Naive thymus-derived CD4-positive, alpha-beta T cell (primary cell): ENCODE measurements at regions of chr2 and their contacts with region 1.

Region 1: GRCh38 chr2:112606488-112606902 is 22.1 kb downstream of the CHCHD5 start:
- DNase-seq: no peak
- ATAC-seq: no peak
- H3K4me3 ChIP-seq: no peak overlapping the region
- H3K4me3 Mint-ChIP-seq: no peak overlapping the region
- H3K27ac ChIP-seq: no peak overlapping the region
- H3K27ac Mint-ChIP-seq: peak overlapping the region in 1 of 9 donors; percentile 45
- H3K4me1 ChIP-seq: no peaks in the 10 kb centered on the region
- H3K4me1 Mint-ChIP-seq: peaks cover 0 to 3% (median 0%) of the 10 kb centered on the region in 7 donors
- H3K27me3 ChIP-seq: no peaks in the 10 kb centered on the region
- H3K27me3 Mint-ChIP-seq: peaks cover 0 to 21% (median 0%) of the 10 kb centered on the region in 5 donors

Region 2: DNA sequence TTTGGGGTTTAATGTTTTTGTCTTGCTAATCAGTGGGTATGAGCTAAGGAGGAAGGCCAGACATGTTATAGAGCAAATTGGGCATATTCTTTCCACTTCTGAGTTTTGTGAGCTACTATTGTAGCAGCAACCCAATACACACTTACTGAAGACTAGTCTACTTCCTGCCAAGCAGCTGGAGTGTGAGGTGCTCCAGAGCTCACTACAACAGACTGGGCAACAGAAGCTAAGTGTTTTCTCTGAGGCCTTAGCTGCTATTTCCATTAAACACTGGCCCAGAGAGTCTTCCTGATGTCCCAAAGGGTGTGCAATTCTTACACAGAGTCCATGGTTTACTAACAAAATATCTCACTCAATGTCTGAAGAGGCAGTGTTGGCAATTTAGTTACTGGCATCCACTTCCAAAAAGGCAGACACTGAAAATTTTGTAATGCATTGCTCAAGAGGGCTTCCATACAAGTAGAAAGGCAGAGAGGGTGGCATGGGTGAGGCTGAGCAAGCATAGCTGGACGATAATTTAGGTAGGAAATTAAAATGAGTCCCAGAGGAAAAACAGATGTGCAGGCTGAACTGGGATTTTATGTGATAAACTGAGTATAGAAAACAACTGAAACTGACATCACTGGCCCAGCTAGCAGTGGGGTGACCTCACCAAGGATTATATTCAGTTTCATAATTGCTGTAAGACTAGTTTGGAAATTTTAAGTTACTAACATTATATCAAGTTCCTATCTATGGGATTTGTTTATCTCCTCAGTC is 262.5 kb before region 1 on chr2:
- CTCF ChIA-PET with region 1: no interaction called
- POLR2A ChIA-PET with region 1: no interaction called
- intact Hi-C with region 1: no loop called
- DNase-seq: no peak
- ATAC-seq: no peak
- H3K4me3 ChIP-seq: no peak overlapping the region
- H3K4me3 Mint-ChIP-seq: no peak overlapping the region
- H3K27ac ChIP-seq: no peak overlapping the region
- H3K27ac Mint-ChIP-seq: no peak overlapping the region
- H3K4me1 ChIP-seq: no peaks in the 10 kb centered on the region
- H3K4me1 Mint-ChIP-seq: peaks cover 0 to 14% (median 0%) of the 10 kb centered on the region in 7 donors
- H3K27me3 ChIP-seq: no peaks in the 10 kb centered on the region
- H3K27me3 Mint-ChIP-seq: peaks cover 0 to 10% (median 0%) of the 10 kb centered on the region in 5 donors

Region 3: GRCh38 chr2:112636231-112636960 is 29.9 kb after region 1 on chr2:
- CTCF ChIA-PET with region 1: no interaction called
- POLR2A ChIA-PET with region 1: no interaction called
- intact Hi-C with region 1: no loop called
- DNase-seq: no peak
- ATAC-seq: no peak
- H3K4me3 ChIP-seq: no peak overlapping the region
- H3K4me3 Mint-ChIP-seq: peak overlapping the region in 6 of 10 donors; percentile 1 to 73 (median 35)
- H3K27ac ChIP-seq: no peak overlapping the region
- H3K27ac Mint-ChIP-seq: peak overlapping the region in 6 of 9 donors; percentile 16 to 95 (median 82)
- H3K4me1 ChIP-seq: peaks cover 50 to 59% of the 10 kb centered on the region in 2 donors
- H3K4me1 Mint-ChIP-seq: peaks cover 44 to 81% (median 55%) of the 10 kb centered on the region in 7 donors
- H3K27me3 ChIP-seq: no peaks in the 10 kb centered on the region
- H3K27me3 Mint-ChIP-seq: no peaks in the 10 kb centered on the region

Region 4: GRCh38 chr2:112726497-112727190 is 120.1 kb after region 1 on chr2:
- CTCF ChIA-PET with region 1: interaction called, 57 read pairs
- POLR2A ChIA-PET with region 1: no interaction called
- intact Hi-C with region 1: no loop called
- DNase-seq: peak; percentile 68 to 89 (median 83)
- ATAC-seq: peak; percentile 96
- H3K4me3 ChIP-seq: no peak overlapping the region
- H3K4me3 Mint-ChIP-seq: no peak overlapping the region
- H3K27ac ChIP-seq: no peak overlapping the region
- H3K27ac Mint-ChIP-seq: peak overlapping the region in 2 of 9 donors; percentile 51 to 73
- H3K4me1 ChIP-seq: no peaks in the 10 kb centered on the region
- H3K4me1 Mint-ChIP-seq: peaks cover 0 to 29% (median 0%) of the 10 kb centered on the region in 7 donors
- H3K27me3 ChIP-seq: no peaks in the 10 kb centered on the region
- H3K27me3 Mint-ChIP-seq: peaks cover 0 to 2% (median 0%) of the 10 kb centered on the region in 5 donors